ENCODE measurements at regions of chr20 and their contacts with region 1.

Region 1: DNA sequence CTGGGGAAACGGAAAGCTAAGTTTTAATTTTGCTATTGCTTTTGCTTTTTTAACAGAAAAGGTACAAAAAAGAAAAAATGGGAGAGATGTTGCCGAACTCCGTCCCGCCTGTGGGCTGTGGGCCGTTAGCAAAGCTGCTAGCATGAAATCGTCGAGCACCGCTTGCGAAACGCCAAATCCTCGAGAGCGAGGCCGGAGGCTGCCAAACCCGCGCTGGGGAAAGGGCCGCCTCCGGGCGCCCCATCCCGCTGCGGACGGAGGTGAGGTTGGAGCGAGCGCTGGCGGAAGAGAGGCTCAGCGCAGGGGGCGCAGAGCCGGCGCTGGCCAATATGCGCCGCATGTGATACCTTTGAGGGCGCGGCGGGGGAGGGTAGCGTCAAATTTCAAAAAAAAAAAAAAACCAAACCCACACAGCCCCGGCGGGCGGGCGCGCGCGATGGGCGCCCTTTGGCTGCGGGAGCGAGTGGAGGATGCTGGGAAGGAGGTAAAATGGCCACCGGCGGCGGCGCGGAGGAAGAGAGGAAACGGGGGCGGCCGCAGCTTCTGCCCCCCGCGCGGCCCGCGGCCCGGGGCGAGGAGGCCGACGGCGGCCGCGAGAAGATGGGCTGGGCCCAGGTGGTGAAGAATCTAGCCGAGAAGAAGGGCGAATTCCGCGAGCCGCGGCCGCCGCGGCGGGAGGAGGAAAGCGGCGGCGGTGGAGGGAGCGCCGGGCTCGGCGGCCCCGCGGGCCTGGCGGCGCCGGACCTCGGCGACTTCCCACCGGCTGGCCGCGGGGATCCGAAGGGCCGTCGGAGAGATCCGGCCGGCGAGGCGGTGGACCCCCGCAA is at the start of gene ZCCHC3:
- DNase-seq: peak; percentile 74 to 92 (median 82)
- ATAC-seq: peak; percentile 88 to 91
- H3K4me3 Mint-ChIP-seq: peak within 1 kb of the TSS; percentile 93 to 100 (median 99)
- H3K27ac Mint-ChIP-seq: peak within 1 kb of the TSS; percentile 97 to 99 (median 98)
- H3K4me1 Mint-ChIP-seq: peaks cover 19 to 50% (median 45%) of the 10 kb centered on the region in 4 donors
- H3K27me3 Mint-ChIP-seq: no peaks in the 10 kb centered on the region
- polyA plus RNA-seq, gene ZCCHC3: 6.9 to 13.9 (median 7.5) TPM

Region 2: DNA sequence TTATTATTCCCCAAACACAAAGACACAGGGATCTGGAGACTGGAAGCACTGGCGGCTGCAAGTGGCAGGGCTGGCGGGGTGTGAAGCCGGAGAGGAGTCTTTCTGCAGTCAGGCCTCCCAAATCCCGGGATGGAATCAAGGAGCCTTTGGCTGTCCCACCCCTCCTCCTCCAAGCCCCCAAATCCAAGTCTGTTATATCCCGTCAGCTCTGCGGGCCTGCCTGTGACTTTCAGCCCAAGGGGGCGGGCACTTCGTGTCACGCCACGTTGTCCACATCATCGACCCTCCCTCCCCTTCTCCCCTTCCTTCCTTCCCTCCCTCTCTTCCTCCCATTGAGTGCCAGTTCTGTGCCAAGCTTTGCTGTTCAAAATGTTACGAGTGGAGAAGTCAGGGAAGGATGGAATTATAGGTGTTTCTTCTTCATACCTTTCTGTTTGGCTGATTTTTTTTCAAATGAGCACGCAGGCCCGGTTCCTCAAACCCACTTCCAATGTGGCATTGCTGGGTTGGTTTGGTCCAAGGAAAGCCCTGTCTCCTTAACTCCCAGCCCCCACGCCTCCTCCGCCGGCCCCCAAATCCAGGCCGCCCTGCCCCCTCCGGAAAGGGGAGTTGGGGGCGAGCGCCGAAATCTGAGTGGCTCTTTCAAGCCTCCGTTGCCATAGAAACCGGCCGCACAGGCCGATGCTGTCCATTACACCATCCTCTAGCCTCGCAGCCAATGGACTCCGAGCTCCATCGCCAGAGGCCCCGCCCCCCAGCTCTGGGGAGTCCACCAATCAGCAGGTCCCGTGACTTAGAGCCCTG is 12.7 kb after region 1 on chr20:
- POLR2A ChIA-PET with region 1: interaction called, 20 read pairs
- DNase-seq: peak; percentile 63 to 94 (median 84)
- ATAC-seq: peak; percentile 100
- H3K4me3 Mint-ChIP-seq: peak overlapping the region; percentile 81 to 93 (median 87)
- H3K27ac Mint-ChIP-seq: peak overlapping the region; percentile 27 to 93 (median 86)
- H3K4me1 Mint-ChIP-seq: peaks cover 11 to 19% (median 17%) of the 10 kb centered on the region in 4 donors
- H3K27me3 Mint-ChIP-seq: no peaks in the 10 kb centered on the region

Region 3: DNA sequence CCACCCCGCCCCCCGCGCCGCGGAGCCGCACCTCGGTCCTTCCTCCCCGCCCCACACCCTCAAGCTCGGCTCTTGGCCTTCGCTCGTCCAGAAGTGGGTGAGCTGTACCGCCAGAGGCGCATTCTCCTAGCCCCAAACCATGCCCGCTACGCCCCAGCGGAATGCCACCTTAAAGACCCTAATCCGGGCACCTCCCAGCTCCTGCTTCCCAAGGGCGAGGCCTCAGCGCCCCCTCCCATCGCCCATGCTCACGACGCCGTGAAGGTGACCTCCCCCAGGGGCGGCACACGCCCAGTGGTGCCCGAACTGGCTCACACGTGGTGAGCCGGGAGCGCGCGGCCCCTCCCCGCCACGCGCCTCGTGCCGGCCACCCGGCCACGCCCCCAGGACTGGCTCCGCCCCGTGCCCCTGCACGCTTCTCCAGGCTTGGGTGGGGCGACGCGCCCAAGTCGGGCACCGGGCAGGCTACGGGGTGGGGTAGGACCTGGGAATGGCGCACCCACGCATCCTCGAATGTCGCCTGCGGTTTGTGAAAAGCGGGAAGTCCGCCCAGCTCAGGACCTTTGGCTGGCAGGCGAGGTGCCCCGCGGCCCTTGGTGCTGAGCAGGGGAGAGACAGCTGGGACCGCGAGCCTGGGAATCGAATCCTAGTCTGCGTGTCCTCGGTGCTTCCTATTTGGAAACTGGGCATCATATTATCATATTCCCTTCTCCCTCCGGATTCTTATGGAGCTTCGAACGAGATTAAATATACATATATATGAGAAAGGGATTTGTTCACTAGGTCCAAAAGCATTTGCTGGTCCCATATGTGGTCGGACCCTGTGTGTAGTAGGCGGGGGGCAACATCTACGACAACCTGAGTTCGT is 27.1 kb after region 1 on chr20:
- POLR2A ChIA-PET with region 1: interaction called, 140 read pairs
- DNase-seq: peak; percentile 79 to 93 (median 88)
- ATAC-seq: peak; percentile 53 to 60
- H3K4me3 Mint-ChIP-seq: peak overlapping the region; percentile 87 to 96 (median 92)
- H3K27ac Mint-ChIP-seq: peak overlapping the region; percentile 61 to 97 (median 95)
- H3K4me1 Mint-ChIP-seq: peaks cover 9 to 33% (median 29%) of the 10 kb centered on the region in 4 donors
- H3K27me3 Mint-ChIP-seq: no peaks in the 10 kb centered on the region

Region 4: GRCh38 chr20:543369-544152 is 246.2 kb after region 1 on chr20 and contains the start of gene CSNK2A1:
- POLR2A ChIA-PET with region 1: interaction called, 10 read pairs
- DNase-seq: peak; percentile 93 to 100 (median 96)
- ATAC-seq: peak; percentile 94
- H3K4me3 Mint-ChIP-seq: peak within 1 kb of the TSS; percentile 81 to 99 (median 96)
- H3K27ac Mint-ChIP-seq: peak within 1 kb of the TSS; percentile 98 to 100 (median 99)
- H3K4me1 Mint-ChIP-seq: peaks cover 27 to 59% (median 55%) of the 10 kb centered on the region in 4 donors
- H3K27me3 Mint-ChIP-seq: peaks cover 0 to 5% (median 4%) of the 10 kb centered on the region in 5 donors
- polyA plus RNA-seq, gene CSNK2A1: 49.6 to 52.0 (median 49.7) TPM

Measured in naive thymus-derived CD8-positive, alpha-beta T cell (primary cell).